MCF 10A (cell line): ENCODE measurements at regions of chr1 and their contacts with region 1.

Region 1: GRCh38 chr1:181469829-181470228 is 13.5 kb upstream of the CACNA1E start:
- DNase-seq: peak; percentile 87
- H3K4me3 Mint-ChIP-seq: peak overlapping the region; percentile 13
- H3K27ac Mint-ChIP-seq: peak overlapping the region; percentile 0
- H3K4me1 Mint-ChIP-seq: peaks cover 19% of the 10 kb centered on the region
- H3K27me3 Mint-ChIP-seq: no peaks in the 10 kb centered on the region
- CTCF ChIP-seq: no peak

Region 2: GRCh38 chr1:179794669-179795068 is 1675.2 kb before region 1 on chr1:
- CTCF ChIA-PET with region 1: no interaction called
- POLR2A ChIA-PET with region 1: no interaction called
- intact Hi-C with region 1: no loop called
- DNase-seq: no peak
- H3K4me3 Mint-ChIP-seq: no peak overlapping the region
- H3K27ac Mint-ChIP-seq: no peak overlapping the region
- H3K4me1 Mint-ChIP-seq: no peaks in the 10 kb centered on the region
- H3K27me3 Mint-ChIP-seq: no peaks in the 10 kb centered on the region
- CTCF ChIP-seq: no peak

Region 3: DNA sequence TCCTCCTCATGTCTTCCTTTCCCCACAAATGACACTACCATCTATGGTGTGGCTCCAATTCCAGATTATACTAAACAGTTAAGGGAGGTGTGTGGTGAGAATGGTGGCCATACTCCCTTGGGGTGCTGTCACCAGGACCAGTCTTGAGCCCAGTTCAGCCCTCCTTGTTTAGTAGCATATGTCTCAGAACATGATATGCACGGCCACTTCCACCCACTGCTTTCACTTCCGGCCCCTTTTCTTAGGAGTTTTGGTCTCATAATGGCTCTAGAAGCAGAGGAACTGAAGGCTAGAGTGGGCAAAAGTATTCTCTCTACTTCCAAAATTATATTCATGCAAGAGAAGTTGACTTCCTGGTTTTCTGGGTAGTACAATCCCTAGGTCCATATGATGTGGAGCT is 31.8 kb before region 1 on chr1:
- CTCF ChIA-PET with region 1: no interaction called
- POLR2A ChIA-PET with region 1: no interaction called
- intact Hi-C with region 1: no loop called
- DNase-seq: no peak
- H3K4me3 Mint-ChIP-seq: no peak overlapping the region
- H3K27ac Mint-ChIP-seq: no peak overlapping the region
- H3K4me1 Mint-ChIP-seq: peaks cover 5% of the 10 kb centered on the region
- H3K27me3 Mint-ChIP-seq: peaks cover 31% of the 10 kb centered on the region
- CTCF ChIP-seq: no peak

Region 4: DNA sequence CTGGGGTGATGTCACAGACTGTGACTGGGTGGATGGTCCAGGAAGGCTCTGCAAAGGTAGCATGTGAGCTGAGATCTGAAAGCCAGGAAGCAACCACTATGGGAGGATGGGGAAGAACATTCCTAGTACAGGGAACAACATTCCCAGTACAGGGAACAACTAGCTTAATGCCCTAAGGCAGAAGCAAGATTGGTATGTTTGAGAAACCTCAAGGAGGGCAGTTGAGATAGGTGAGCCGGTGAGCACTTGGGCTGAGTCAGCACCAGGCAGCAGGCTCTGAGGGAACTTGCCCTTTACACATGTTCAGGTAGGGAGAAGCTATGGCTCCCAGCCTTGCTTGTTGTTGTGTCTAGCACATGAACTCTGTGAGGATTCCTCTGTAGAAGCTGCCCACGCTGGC is 10.8 kb before region 1 on chr1:
- CTCF ChIA-PET with region 1: interaction called, 5 read pairs
- POLR2A ChIA-PET with region 1: interaction called, 11 read pairs
- intact Hi-C with region 1: no loop called
- DNase-seq: peak; percentile 41
- H3K4me3 Mint-ChIP-seq: no peak overlapping the region
- H3K27ac Mint-ChIP-seq: no peak overlapping the region
- H3K4me1 Mint-ChIP-seq: no peaks in the 10 kb centered on the region
- H3K27me3 Mint-ChIP-seq: no peaks in the 10 kb centered on the region
- CTCF ChIP-seq: no peak

Region 5: GRCh38 chr1:181541947-181542346 is 72.1 kb after region 1 on chr1:
- CTCF ChIA-PET with region 1: no interaction called
- POLR2A ChIA-PET with region 1: interaction called, 10 read pairs
- intact Hi-C with region 1: no loop called
- DNase-seq: peak; percentile 70
- H3K4me3 Mint-ChIP-seq: no peak overlapping the region
- H3K27ac Mint-ChIP-seq: no peak overlapping the region
- H3K4me1 Mint-ChIP-seq: no peaks in the 10 kb centered on the region
- H3K27me3 Mint-ChIP-seq: peaks cover 12% of the 10 kb centered on the region
- CTCF ChIP-seq: no peak